Activated CD8-positive, alpha-beta T cell treated with anti-CD3 and anti-CD28 coated beads for 36 hours (primary cell): ENCODE measurements at regions of chr2 and their contacts with region 1.

Region 1: DNA sequence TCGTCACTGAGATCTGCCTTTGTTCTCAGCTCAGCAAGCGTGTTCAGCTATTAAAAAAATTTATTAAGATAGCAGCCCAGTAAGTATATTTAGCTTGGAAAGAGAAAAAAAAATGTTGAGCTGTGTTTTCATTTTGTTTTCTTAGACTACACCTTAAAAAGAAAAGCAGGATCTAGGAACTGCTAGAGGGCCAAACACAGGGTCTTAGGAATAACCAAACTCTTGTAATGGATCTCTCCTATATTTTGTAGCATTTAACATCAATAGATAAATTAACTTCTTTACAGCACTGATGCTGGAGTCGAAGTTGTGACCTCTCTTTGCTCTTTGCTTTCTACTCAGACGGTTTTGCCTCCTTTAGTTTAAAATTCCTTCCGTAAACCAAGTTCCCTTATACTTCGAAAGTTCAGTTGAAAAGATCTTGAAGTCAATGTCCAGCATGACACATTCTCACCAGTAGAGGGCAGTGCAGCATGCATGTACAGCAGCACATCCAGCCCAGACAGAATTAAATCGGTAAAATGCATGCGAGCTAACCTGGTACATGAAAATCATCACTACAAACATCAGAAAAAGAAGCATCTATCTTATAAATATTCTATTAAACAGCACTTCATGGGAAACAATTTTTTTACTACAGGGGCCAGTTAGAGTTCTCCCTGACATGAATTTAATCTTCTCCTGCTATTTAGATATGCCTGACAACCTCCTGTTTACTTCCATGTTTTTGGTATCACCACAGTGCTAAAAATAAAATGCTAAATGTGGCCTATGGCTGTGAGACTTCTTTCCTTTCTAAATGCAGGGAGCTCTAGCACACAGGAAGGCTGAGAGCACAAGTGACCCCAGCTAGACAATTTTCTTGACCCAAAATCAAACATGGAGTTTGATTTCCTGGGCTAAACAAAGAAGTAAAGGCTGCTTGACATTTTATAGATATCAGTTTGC is 48.2 kb upstream of the MAP3K20 start:
- DNase-seq: peak; percentile 90
- ATAC-seq: peak; percentile 73
- H3K4me3 Mint-ChIP-seq: no peak overlapping the region
- H3K27ac Mint-ChIP-seq: no peak overlapping the region
- H3K4me1 Mint-ChIP-seq: peaks cover 3% of the 10 kb centered on the region
- H3K27me3 Mint-ChIP-seq: peaks cover 2% of the 10 kb centered on the region
- CTCF ChIP-seq: peak; percentile 87

Region 2: DNA sequence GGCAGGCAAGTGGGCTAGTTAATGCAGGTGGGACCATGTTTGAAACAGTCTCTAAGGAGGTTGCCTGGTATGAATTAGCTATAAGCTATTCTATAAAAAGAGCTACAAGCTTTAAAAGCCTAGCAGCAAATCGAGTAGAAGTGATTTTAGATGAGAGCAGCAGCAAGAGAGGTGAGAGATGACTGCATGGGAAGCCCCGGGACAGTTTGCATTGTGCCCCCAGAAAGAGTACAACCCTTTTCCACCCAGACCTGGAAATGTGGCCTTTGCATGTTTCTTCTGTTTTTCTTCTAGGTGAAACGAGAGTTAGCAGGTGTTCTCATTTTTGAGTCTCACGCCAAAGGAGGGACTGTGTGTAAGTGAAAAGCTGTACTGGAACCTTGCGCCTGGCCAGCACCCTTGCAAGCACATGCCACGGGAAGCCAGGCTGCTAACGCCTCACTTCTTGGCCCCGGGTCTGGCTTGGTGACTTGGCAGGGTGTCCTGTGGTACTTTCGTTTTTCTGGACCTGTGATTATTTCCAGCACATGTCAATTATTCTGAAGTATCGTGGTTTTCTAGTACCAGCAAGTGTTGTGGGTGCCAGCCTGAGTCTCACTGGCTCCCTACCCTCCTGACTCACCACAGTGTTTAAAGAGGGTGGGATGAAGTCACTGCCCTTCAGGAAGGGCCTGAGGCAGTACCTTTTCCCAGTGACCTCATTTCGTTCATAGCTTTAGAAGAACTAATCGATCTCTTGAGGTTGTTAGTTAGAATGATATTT is 42.1 kb before region 1 on chr2:
- CTCF ChIA-PET with region 1: interaction called, 10 read pairs
- POLR2A ChIA-PET with region 1: no interaction called
- intact Hi-C with region 1: no loop called
- DNase-seq: peak; percentile 25
- ATAC-seq: peak; percentile 55
- H3K4me3 Mint-ChIP-seq: no peak overlapping the region
- H3K27ac Mint-ChIP-seq: peak overlapping the region; percentile 44
- H3K4me1 Mint-ChIP-seq: peaks cover 14% of the 10 kb centered on the region
- H3K27me3 Mint-ChIP-seq: peaks cover 4% of the 10 kb centered on the region
- CTCF ChIP-seq: no peak

Region 3: GRCh38 chr2:173037245-173038120 is 10.0 kb after region 1 on chr2:
- CTCF ChIA-PET with region 1: interaction called, 10 read pairs
- POLR2A ChIA-PET with region 1: no interaction called
- intact Hi-C with region 1: no loop called
- DNase-seq: no peak
- ATAC-seq: no peak
- H3K4me3 Mint-ChIP-seq: no peak overlapping the region
- H3K27ac Mint-ChIP-seq: no peak overlapping the region
- H3K4me1 Mint-ChIP-seq: peaks cover 4% of the 10 kb centered on the region
- H3K27me3 Mint-ChIP-seq: no peaks in the 10 kb centered on the region
- CTCF ChIP-seq: no peak

Region 4: GRCh38 chr2:173205375-173205774 is 177.9 kb after region 1 on chr2:
- CTCF ChIA-PET with region 1: interaction called, 304 read pairs
- POLR2A ChIA-PET with region 1: no interaction called
- intact Hi-C with region 1: loop called (anchors 2 kb)
- DNase-seq: no peak
- ATAC-seq: no peak
- H3K4me3 Mint-ChIP-seq: no peak overlapping the region
- H3K27ac Mint-ChIP-seq: no peak overlapping the region
- H3K4me1 Mint-ChIP-seq: peaks cover 2% of the 10 kb centered on the region
- H3K27me3 Mint-ChIP-seq: no peaks in the 10 kb centered on the region
- CTCF ChIP-seq: no peak

Region 5: DNA sequence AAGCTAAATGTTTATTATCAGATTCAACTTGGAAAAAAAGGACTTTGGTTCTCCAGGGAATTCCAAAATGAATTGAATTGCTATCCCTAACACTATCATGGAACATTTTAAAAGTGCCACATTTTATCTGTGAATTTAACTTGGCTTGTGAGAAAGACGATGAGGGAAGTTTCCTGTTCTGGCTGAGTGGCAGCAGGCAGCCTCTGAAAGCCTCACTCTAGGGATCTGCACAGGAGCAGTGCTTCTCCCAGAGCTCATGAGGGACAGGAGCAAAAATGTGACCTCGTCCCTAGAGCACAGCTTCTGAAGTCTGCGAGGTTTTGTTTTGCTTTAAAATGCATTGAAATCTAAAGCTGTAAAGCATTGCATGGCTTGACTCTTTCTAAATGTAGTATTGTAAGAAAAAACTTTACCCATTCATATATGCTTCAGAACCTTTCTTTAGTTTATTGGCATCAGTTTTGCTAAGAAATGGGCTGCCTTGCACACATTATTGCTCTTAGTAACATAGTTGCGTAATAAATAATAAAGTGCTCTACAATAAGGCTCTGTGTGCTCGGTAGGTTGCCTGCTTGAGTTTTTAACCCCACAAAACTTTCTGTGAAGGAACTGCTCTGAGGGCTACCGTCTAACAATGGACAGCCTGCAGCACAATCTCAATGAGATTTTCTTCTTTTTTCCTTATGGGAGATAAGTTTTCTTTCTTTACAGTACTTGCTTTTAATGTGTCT is 191.0 kb after region 1 on chr2:
- CTCF ChIA-PET with region 1: interaction called, 78 read pairs
- POLR2A ChIA-PET with region 1: no interaction called
- intact Hi-C with region 1: no loop called
- DNase-seq: no peak
- ATAC-seq: no peak
- H3K4me3 Mint-ChIP-seq: no peak overlapping the region
- H3K27ac Mint-ChIP-seq: no peak overlapping the region
- H3K4me1 Mint-ChIP-seq: peaks cover 5% of the 10 kb centered on the region
- H3K27me3 Mint-ChIP-seq: no peaks in the 10 kb centered on the region
- CTCF ChIP-seq: no peak